ENCODE measurements at regions of chr7 and their contacts with region 1.

Region 1: GRCh38 chr7:138886501-138886917 is 88.5 kb upstream of the ATP6V0A4 start:
- DNase-seq: peak in 1 of 2 donors; percentile 80
- H3K4me3 ChIP-seq: no peak overlapping the region
- H3K27ac ChIP-seq: peak overlapping the region in 1 of 5 donors; percentile 1
- H3K4me1 ChIP-seq: peaks cover 0 to 4% (median 0%) of the 10 kb centered on the region in 4 donors
- H3K27me3 ChIP-seq: no peaks in the 10 kb centered on the region
- CTCF ChIP-seq: peak in 5 of 7 experiments; percentile 41 to 75 (median 72)
- EP300 ChIP-seq: no peak
- POLR2A ChIP-seq: no peak

Region 2: DNA sequence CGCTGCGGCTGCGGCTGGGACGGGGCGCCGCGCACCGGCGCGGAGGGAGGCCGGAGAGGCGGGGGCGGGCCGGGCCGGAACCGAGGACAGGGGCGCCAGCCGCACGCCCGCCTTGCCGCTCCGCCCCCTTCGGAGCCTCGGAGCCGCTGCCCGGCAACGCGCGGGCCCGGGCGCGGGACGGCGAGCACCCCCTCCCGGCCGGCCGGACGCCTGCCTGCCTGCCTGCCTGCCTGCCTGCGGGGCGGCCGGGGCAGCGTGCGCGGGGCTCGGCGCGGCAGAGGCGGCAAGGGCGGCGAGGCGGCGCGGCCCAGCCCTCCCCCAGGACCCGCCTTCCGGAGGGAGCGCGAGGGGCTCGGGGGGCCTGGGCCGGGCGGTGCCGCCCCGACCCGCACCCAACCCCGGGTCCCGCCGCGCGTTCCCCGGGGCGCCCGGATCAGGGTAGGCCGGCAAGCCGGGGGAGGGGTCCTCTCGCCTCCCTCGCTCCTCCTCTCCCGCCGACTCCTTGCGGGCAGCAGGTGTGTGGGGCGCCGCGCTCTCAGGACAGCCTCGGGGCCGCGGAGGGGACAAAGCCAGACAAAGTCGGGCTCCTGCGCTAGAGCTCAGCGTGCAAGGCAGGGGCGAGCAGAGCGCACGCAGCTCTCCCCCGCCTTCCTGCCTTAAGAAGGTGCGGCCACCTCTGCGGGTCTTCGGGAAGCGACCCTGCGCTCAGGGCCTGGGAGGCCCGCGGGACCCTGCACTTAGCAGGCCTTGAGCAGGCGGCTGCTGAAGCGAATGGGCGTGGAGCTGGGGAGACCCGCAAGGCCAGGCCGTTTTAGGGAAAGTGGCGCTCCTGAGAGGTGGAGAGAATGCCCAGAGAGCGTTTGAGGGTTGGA is 95.1 kb after region 1 on chr7 and contains the start of gene KIAA1549:
- intact Hi-C with region 1: loop called (anchors 10 kb)
- DNase-seq: peak; percentile 77 to 94
- H3K4me3 ChIP-seq: peak within 1 kb of the TSS; percentile 59 to 86 (median 67)
- H3K27ac ChIP-seq: peak within 1 kb of the TSS; percentile 44 to 71 (median 64)
- H3K4me1 ChIP-seq: peaks cover 10 to 25% (median 21%) of the 10 kb centered on the region in 4 donors
- H3K27me3 ChIP-seq: peaks cover 0 to 20% (median 0%) of the 10 kb centered on the region in 3 donors
- CTCF ChIP-seq: peak in 1 of 7 experiments; percentile 49
- EP300 ChIP-seq: no peak
- POLR2A ChIP-seq: no peak
- total RNA-seq, gene KIAA1549: 0.87 to 7.8 (median 3.1) TPM